ENCODE measurements at regions of chr15 and their contacts with region 1.

Region 1: DNA sequence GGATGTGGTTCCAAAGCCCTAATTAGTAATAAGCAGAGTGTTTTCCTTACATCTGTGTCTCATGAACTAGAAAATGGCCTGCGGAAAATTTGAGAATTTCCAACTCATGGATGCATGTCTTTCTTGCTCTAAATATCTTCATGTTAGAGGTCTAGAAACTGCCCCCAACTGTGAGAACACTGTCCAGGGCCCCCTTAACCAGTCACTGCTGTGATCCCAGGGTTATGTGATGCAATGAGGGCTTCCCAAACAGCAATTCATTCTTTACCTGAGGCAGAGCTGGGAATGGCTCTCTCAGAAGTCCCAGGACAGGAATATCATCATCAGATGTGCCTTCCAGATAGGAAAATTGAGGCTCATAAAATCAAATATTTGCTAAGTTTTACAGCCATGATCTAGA is 8.2 kb downstream of the NPAP1 start:
- DNase-seq: no peak
- H3K4me3 ChIP-seq: no peak overlapping the region
- H3K27ac ChIP-seq: no peak overlapping the region
- H3K4me1 ChIP-seq: no peaks in the 10 kb centered on the region
- H3K27me3 ChIP-seq: no peaks in the 10 kb centered on the region
- CTCF ChIP-seq: no peak
- EP300 ChIP-seq: no peak
- POLR2A ChIP-seq: no peak

Region 2: GRCh38 chr15:24748812-24749439 is 65.2 kb after region 1 on chr15:
- intact Hi-C with region 1: loop called (anchors 10 kb)
- DNase-seq: no peak
- H3K4me3 ChIP-seq: no peak overlapping the region
- H3K27ac ChIP-seq: no peak overlapping the region
- H3K4me1 ChIP-seq: no peaks in the 10 kb centered on the region
- H3K27me3 ChIP-seq: peaks cover 0 to 7% (median 0%) of the 10 kb centered on the region in 3 donors
- CTCF ChIP-seq: no peak
- EP300 ChIP-seq: no peak
- POLR2A ChIP-seq: no peak